GM13977 (cell line): ENCODE measurements at regions of chr7 and their contacts with region 1.

Region 1: GRCh38 chr7:99046722-99047121 is 97.2 kb downstream of the SMURF1 start:
- DNase-seq: no peak
- CTCF ChIP-seq: no peak

Region 2: DNA sequence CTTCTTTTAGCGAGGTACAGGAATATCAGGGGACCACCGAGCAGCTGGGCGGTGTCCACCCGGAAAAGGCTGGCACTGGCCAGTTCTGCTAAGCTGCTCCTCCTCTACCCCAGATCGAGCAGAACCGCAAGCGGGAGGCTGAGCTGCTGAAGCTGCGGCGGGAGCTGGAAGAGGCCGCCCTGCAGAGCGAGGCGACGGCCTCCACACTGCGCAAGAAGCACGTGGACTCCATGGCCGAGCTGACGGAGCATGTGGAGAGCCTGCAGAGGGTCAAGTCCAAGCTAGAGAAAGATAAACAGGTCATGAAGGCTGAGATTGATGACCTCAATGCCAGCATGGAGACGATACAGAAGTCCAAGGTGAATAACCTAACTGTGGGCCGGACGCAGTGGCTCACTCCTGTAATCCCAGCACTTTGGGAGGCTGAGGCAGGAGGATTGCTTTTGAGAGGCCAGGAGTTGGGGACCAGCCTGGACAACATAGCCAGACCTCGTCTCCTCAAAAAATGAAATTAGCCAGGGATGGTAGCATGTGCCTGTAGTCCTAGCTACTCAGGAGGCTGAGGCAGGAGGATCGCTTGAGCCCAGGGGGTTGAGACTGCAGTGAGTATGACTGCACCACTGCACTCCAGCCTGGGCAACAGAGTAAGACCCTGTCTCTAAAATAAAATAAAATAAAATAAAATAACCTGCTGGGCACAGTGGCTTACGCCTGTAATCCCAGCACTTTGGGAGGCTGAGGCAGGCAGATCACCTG is 241.2 kb after region 1 on chr7:
- in situ Hi-C with region 1: no loop called
- DNase-seq: no peak
- CTCF ChIP-seq: no peak

Region 3: GRCh38 chr7:99312316-99313203 is 265.8 kb after region 1 on chr7:
- in situ Hi-C with region 1: loop called (anchors 5 kb)
- DNase-seq: peak; percentile 75
- CTCF ChIP-seq: peak; percentile 80